ENCODE measurements at regions of chr19 and their contacts with region 1.

Region 1: DNA sequence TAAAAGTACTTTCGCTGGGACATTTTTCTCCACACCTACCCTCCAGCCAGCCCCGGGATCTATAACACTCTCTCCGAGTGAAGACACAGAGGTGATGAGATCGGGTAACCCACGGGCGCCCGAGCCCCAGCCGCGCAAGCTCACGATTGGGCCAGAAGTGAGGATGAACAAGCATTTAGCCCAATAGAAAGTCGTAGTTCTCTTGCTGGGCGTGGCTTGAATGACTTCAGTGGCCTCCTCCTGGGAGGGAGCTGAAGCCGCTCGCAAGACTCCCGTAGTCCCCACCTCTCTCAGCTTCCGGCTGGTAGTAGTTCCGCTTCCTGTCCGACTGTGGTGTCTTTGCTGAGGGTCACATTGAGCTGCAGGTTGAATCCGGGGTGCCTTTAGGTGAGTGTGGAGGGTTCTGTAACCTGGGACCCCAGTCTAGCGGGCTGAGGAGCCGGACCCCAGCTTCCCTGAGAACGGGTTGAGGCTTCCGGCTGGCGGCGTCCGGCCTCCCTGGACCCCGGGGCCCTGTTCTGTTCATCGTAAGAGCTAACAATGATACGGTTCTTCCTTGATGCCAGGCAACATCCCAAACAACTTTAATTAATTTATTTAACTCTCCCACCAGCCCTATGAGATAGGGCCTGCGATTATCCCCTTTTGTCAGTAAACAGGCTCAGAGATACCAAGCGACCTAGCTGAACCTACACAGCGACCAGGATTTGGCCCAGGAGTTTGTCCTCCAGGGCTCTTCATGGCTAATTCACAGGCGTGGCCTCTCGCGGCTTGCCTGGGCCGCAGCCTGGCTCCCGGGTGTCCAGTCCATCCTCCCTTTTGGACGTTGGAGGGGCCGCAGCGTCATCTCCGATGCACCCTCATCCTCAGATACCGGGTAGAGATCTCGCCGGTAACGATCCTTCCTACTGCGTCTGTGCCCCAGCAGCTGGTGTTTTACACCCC is at the start of gene COX6B1:
- DNase-seq: peak; percentile 93
- H3K4me3 Mint-ChIP-seq: peak within 1 kb of the TSS; percentile 95
- H3K27ac Mint-ChIP-seq: peak within 1 kb of the TSS; percentile 89
- H3K4me1 Mint-ChIP-seq: peaks cover 25% of the 10 kb centered on the region
- H3K27me3 Mint-ChIP-seq: no peaks in the 10 kb centered on the region
- total RNA-seq, gene COX6B1: 434 and 451 TPM in 2 replicates

Region 2: DNA sequence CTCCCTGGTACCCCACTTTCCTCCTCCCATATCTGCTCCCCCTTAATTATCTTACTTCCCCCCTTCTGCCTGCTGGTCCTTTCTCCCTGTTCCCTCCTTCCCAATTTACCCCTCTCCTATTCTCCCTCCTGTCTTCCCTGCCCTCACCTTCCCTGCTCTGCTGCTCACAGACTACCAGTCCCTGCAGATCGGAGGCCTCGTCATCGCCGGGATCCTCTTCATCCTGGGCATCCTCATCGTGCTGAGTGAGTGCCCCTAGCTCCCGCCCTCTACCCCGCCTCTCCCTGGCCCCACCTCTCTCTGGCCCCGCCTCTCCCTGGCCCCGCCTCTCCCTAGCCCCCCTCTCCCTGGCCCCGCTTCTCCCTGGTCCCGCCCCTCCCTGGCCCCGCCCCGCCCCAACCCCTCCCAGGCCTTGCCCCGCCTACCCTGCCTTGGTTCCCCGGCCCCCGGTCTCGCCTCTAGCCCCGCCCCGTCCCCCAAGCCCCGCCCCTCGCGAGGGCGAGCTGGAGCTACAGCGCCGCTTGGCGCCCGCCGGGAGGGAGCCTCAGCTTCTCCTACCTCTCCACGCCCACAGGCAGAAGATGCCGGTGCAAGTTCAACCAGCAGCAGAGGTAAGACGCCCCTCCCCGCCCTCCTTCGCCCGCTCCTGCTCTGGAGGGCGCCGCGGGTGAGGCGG is 507.2 kb before region 1 on chr19:
- intact Hi-C with region 1: loop called (anchors 1 kb)
- DNase-seq: peak; percentile 90
- H3K4me3 Mint-ChIP-seq: peak overlapping the region; percentile 82
- H3K27ac Mint-ChIP-seq: peak overlapping the region; percentile 79
- H3K4me1 Mint-ChIP-seq: peaks cover 25% of the 10 kb centered on the region
- H3K27me3 Mint-ChIP-seq: peaks cover 14% of the 10 kb centered on the region

Region 3: GRCh38 chr19:35628565-35629331 is 19.5 kb before region 1 on chr19 and contains the start of gene RBM42:
- intact Hi-C with region 1: loop called (anchors 1 kb)
- DNase-seq: peak; percentile 96
- H3K4me3 Mint-ChIP-seq: peak within 1 kb of the TSS; percentile 100
- H3K27ac Mint-ChIP-seq: peak within 1 kb of the TSS; percentile 100
- H3K4me1 Mint-ChIP-seq: peaks cover 12% of the 10 kb centered on the region
- H3K27me3 Mint-ChIP-seq: no peaks in the 10 kb centered on the region
- total RNA-seq, gene RBM42: 105 and 118 TPM in 2 replicates

Region 4: DNA sequence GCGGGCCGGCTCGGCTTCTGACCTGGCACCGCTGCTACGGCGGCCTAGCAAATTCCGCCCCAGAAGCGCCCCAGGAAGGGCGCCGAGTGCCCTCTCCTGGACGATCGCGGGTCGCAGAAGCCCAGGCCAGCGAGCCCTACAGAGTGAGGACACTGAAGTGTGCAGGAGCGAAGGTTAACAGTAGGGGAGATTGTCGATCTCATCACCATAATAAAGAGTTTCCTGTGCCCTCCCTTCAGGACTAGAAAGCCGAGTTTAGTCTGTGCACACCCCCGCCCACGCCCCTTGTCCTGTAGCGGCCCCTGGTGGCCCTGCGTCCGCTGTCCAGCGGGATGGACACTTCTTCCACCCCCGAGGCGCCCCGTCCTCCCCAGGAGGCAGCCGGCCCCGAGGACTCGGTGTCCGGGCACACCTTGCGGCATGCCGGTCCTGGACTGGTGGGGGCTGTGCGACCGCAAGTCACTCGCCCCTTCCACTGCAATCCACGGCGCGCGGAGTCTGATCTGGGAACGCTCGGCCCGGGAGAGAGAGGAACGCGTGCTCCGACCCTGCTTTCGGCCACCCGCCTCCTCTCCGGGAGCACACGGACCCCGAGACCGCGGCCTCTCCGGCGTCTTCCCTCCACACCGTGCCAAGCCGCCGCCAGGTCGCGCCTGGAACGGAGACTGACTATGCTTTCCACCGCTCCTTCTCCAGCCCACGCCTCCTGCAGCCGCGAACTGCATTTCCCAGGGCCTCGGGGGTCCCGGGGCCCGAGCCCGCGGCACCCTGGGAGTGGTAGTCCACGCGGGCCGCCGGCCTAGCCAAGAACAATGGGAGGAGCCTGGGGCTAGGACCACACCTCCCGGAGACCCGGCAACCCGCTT is 68.7 kb after region 1 on chr19:
- intact Hi-C with region 1: loop called (anchors 1 kb)
- DNase-seq: peak; percentile 97
- H3K4me3 Mint-ChIP-seq: peak overlapping the region; percentile 99
- H3K27ac Mint-ChIP-seq: peak overlapping the region; percentile 98
- H3K4me1 Mint-ChIP-seq: peaks cover 50% of the 10 kb centered on the region
- H3K27me3 Mint-ChIP-seq: no peaks in the 10 kb centered on the region

Region 5: DNA sequence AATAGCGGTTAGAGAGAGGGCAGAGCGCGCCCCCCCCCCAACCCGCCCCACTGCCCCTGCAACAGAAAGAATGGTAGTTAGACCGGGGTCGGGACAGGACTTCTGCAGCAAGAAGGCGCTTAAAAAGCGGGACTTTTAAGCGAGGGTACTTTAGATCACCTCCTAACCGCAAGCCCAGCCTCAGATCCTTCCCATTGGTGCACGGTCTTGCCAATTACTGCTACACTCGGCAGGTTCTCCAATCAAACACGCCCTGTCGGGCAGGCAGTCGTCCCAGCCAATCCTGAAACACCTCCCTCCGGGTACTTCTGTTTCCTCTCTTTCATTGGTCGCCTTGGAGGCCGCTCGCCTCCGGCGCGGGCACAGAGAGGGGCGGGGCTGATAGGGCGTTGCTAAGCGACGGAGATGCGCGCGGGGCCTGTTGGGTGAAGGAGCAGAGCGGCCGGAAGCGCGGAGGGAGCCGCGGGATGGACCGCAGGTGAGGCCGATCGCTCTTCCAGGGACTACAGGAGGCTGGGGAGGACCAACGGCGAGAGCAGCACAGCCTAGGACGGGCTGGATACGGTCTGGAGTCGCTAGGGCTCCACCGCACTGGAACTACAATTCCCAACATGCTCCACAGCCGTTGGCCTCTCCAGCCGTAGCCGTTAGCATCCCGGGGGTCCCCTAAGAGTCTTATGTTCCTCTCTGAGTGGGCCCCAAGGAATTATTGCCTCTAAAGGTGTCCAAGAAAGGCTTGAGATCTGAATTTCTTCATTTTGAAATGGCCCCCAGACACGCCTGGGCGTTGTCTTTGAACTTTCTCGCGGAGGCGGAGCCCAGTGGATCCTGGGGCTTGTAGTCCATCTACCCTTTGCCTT is 109.7 kb after region 1 on chr19 and contains the start of gene PROSER3:
- intact Hi-C with region 1: loop called (anchors 1 kb)
- DNase-seq: peak; percentile 99
- H3K4me3 Mint-ChIP-seq: peak within 1 kb of the TSS; percentile 89
- H3K27ac Mint-ChIP-seq: peak within 1 kb of the TSS; percentile 90
- H3K4me1 Mint-ChIP-seq: peaks cover 29% of the 10 kb centered on the region
- H3K27me3 Mint-ChIP-seq: no peaks in the 10 kb centered on the region
- total RNA-seq, gene PROSER3: 39.5 and 45.1 TPM in 2 replicates

Region 6: DNA sequence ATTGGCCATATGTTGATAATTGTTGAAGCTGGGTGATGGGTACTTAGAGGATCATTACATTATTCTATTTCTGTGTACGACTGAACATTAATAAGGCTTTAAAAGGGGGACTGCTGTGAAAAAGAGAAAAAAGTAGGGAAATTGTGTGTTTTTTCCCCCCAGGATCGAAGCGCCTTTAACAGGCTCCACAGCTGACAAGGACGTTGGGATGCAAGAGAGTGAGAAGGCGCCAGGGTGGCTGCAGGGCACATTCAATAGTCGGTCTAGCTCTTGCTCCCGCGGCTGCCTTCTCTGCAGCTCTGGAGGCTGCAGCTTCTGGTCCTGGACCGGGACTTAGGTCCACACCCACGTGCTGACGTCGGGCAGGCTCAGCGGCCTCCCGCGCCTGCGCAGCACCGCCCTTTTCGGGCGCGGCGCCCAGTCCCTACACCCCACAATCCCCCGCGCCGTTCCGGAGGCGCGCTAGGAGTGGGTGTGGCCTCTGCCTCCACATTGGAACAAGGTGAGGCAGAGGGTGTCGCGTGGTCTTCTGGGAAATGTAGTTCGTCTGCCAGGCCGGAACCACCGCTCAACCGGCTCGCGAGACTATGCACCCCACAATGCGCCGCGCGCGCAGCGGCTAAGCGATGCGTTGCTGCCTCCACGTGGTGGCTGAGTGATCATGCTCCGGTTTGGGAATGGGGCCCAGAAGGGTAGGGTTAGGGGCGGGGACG is 283.0 kb after region 1 on chr19:
- intact Hi-C with region 1: loop called (anchors 1 kb)
- DNase-seq: peak; percentile 100
- H3K4me3 Mint-ChIP-seq: peak overlapping the region; percentile 70
- H3K27ac Mint-ChIP-seq: peak overlapping the region; percentile 81
- H3K4me1 Mint-ChIP-seq: peaks cover 30% of the 10 kb centered on the region
- H3K27me3 Mint-ChIP-seq: no peaks in the 10 kb centered on the region